ENCODE measurements at regions of chr2 and their contacts with region 1.

Region 1: GRCh38 chr2:171160119-171160955 is at the start of gene TLK1:
- DNase-seq: peak; percentile 41 to 88 (median 75)
- ATAC-seq: peak; percentile 74 to 81 (median 80)
- H3K4me3 ChIP-seq: peak within 1 kb of the TSS; percentile 73 to 89
- H3K4me3 Mint-ChIP-seq: peak within 1 kb of the TSS; percentile 93 to 98 (median 95)
- H3K27ac ChIP-seq: peak within 1 kb of the TSS; percentile 75
- H3K27ac Mint-ChIP-seq: peak within 1 kb of the TSS; percentile 92 to 95
- H3K4me1 ChIP-seq: peaks cover 16 to 48% of the 10 kb centered on the region in 2 experiments
- H3K4me1 Mint-ChIP-seq: peaks cover 64 to 79% (median 65%) of the 10 kb centered on the region in 3 donors
- H3K27me3 ChIP-seq: no peaks in the 10 kb centered on the region
- H3K27me3 Mint-ChIP-seq: no peaks in the 10 kb centered on the region
- total RNA-seq, gene TLK1: 112 to 129 (median 120) TPM

Region 2: DNA sequence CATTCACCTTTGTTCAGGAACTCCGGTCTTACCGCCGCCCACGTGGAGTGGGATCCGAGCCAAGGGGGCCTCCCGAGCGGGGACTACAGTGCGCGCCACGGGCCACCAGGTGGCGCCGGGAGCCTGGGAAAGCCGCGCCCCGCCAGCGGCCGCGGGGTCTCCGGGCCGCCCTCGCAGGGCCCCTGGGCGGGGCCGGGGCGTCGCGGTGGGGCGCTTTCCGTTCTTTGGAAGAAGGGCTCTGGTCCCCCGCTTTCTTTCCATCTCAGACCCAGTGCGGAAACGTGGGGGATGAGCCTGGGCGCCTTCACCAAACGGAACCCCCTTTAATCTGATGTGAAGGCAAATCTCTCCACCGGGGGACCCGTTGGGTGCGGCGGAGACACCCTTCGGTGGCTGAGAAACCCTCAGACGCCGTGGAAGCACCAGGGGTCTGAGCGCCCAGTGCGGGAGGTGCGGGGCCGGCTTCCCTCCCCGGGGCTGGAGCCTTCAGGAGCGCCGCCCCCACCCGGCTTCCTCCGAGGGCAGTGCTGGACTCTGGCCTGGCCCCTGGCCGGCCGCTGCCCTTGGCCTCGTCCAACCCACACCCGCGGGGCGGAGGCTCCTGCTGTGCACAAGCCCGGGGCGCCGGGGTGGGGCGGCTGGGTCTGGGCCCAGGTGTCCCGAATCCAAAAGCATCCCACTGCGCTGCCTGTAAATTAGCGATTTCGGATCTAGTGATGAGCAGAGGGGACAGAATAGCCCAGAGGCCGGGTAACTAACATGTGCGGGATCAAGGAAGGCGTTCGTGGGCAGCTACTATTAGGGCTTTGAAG is 186.6 kb before region 1 on chr2:
- CTCF ChIA-PET with region 1: interaction called, 10 to 21 read pairs
- POLR2A ChIA-PET with region 1: no interaction called
- DNase-seq: peak; percentile 71 to 95 (median 84)
- ATAC-seq: peak; percentile 94 to 99 (median 96)
- H3K4me3 ChIP-seq: peak overlapping the region; percentile 69 to 91
- H3K4me3 Mint-ChIP-seq: peak overlapping the region; percentile 64 to 79 (median 78)
- H3K27ac ChIP-seq: no peak overlapping the region
- H3K27ac Mint-ChIP-seq: peak overlapping the region; percentile 53 to 75
- H3K4me1 ChIP-seq: peaks cover 9 to 20% of the 10 kb centered on the region in 2 experiments
- H3K4me1 Mint-ChIP-seq: peaks cover 10 to 11% (median 10%) of the 10 kb centered on the region in 3 donors
- H3K27me3 ChIP-seq: no peaks in the 10 kb centered on the region
- H3K27me3 Mint-ChIP-seq: no peaks in the 10 kb centered on the region

Region 3: GRCh38 chr2:171086352-171087290 is 73.7 kb before region 1 on chr2:
- CTCF ChIA-PET with region 1: interaction called, 12 to 19 read pairs
- POLR2A ChIA-PET with region 1: interaction called in 1 of 2 experiments, 3 read pairs
- DNase-seq: peak in 34 of 35 experiments; percentile 17 to 79 (median 56)
- ATAC-seq: peak; percentile 67 to 80 (median 72)
- H3K4me3 ChIP-seq: peak overlapping the region; percentile 31 to 63
- H3K4me3 Mint-ChIP-seq: peak overlapping the region; percentile 66 to 75 (median 74)
- H3K27ac ChIP-seq: peak overlapping the region; percentile 43
- H3K27ac Mint-ChIP-seq: peak overlapping the region; percentile 95 to 97
- H3K4me1 ChIP-seq: peaks cover 12 to 48% of the 10 kb centered on the region in 2 experiments
- H3K4me1 Mint-ChIP-seq: peaks cover 77 to 78% (median 78%) of the 10 kb centered on the region in 3 donors
- H3K27me3 ChIP-seq: no peaks in the 10 kb centered on the region
- H3K27me3 Mint-ChIP-seq: no peaks in the 10 kb centered on the region

Region 4: GRCh38 chr2:171143670-171144062 is 16.7 kb before region 1 on chr2:
- CTCF ChIA-PET with region 1: interaction called, 3 read pairs
- POLR2A ChIA-PET with region 1: interaction called in 1 of 2 experiments, 10 read pairs
- DNase-seq: no peak
- ATAC-seq: no peak
- H3K4me3 ChIP-seq: no peak overlapping the region
- H3K4me3 Mint-ChIP-seq: peak overlapping the region in 1 of 3 donors; percentile 33
- H3K27ac ChIP-seq: no peak overlapping the region
- H3K27ac Mint-ChIP-seq: no peak overlapping the region
- H3K4me1 ChIP-seq: peaks cover 17 to 18% of the 10 kb centered on the region in 2 experiments
- H3K4me1 Mint-ChIP-seq: peaks cover 91 to 92% (median 91%) of the 10 kb centered on the region in 3 donors
- H3K27me3 ChIP-seq: no peaks in the 10 kb centered on the region
- H3K27me3 Mint-ChIP-seq: no peaks in the 10 kb centered on the region